ENCODE measurements at regions of chr19 and their contacts with region 1.

Region 1: GRCh38 chr19:1592755-1593500 is at the start of gene MBD3:
- DNase-seq: peak; percentile 94 to 96 (median 94)
- H3K4me3 ChIP-seq: peak within 1 kb of the TSS; percentile 63 to 87 (median 78)
- H3K4me3 Mint-ChIP-seq: peak within 1 kb of the TSS; percentile 90 to 94
- H3K27ac ChIP-seq: peak within 1 kb of the TSS; percentile 86 to 90
- H3K27ac Mint-ChIP-seq: peak within 1 kb of the TSS; percentile 82 to 95 (median 88)
- H3K4me1 ChIP-seq: peaks cover 28 to 36% of the 10 kb centered on the region in 2 donors
- H3K4me1 Mint-ChIP-seq: peaks cover 28% of the 10 kb centered on the region
- H3K27me3 ChIP-seq: no peaks in the 10 kb centered on the region
- H3K27me3 Mint-ChIP-seq: peaks cover 0 to 2% (median 0%) of the 10 kb centered on the region in 3 donors
- CTCF ChIP-seq: no peak
- polyA plus RNA-seq, gene MBD3: 2.6 to 35.3 (median 4.9) TPM

Region 2: DNA sequence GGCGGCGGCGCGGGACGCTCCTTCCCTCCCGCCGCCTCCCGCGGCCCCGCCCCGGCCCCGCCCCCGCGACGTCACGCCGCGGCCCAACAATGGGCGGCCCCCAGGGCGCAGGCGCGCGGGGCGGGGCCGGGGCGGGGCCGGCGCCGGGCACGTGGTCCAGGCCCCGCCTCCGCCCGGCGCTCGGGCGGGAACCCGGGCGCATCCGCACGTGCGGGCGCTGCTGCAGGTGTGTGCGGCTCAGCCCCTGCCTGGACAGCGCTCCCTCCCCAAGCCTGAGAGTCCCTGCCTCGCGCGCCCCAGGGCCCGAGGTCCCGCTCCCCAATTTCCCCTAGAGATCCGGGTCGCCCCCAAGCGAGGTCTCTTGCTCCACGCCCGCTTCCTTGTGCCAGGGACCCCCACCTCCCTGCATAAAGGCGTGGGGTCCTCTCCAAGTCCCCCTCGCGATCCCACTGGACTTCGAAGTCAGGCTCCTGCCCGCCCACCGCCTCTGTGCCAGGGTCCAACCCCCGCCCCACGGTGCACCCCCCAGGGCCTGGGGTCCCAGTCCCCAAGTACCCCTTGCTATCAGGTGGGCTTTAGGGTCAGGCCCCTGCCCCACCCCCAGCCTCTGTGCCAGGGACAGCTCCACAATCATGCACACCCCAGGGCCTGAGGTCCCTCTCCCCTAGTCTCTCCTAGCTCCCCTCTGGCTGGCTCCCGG is 24.5 kb before region 1 on chr19 and contains the start of gene MEX3D:
- intact Hi-C with region 1: no loop called
- DNase-seq: peak; percentile 45 to 79 (median 70)
- H3K4me3 ChIP-seq: peak within 1 kb of the TSS in 2 of 3 experiments; percentile 7 to 70
- H3K4me3 Mint-ChIP-seq: peak within 1 kb of the TSS; percentile 64 to 82
- H3K27ac ChIP-seq: no peak within 1 kb of the TSS
- H3K27ac Mint-ChIP-seq: peak within 1 kb of the TSS in 1 of 7 donors; percentile 71
- H3K4me1 ChIP-seq: peaks cover 7 to 15% of the 10 kb centered on the region in 2 donors
- H3K4me1 Mint-ChIP-seq: peaks cover 3% of the 10 kb centered on the region
- H3K27me3 ChIP-seq: peaks cover 3 to 27% of the 10 kb centered on the region in 2 donors
- H3K27me3 Mint-ChIP-seq: peaks cover 18 to 64% (median 36%) of the 10 kb centered on the region in 3 donors
- CTCF ChIP-seq: no peak
- polyA plus RNA-seq, gene MEX3D: 0.08 to 1.0 (median 0.10) TPM

Region 3: GRCh38 chr19:1605236-1606137 is 12.6 kb after region 1 on chr19 and contains the start of gene UQCR11:
- intact Hi-C with region 1: loop called in 1 of 2 experiments (anchors 1 kb)
- DNase-seq: peak; percentile 90 to 92 (median 92)
- H3K4me3 ChIP-seq: peak within 1 kb of the TSS; percentile 65 to 99 (median 99)
- H3K4me3 Mint-ChIP-seq: peak within 1 kb of the TSS; percentile 96 to 99
- H3K27ac ChIP-seq: peak within 1 kb of the TSS; percentile 90
- H3K27ac Mint-ChIP-seq: peak within 1 kb of the TSS; percentile 99 to 100 (median 100)
- H3K4me1 ChIP-seq: peaks cover 45 to 54% of the 10 kb centered on the region in 2 donors
- H3K4me1 Mint-ChIP-seq: peaks cover 50% of the 10 kb centered on the region
- H3K27me3 ChIP-seq: peaks cover 0 to 6% of the 10 kb centered on the region in 2 donors
- H3K27me3 Mint-ChIP-seq: peaks cover 3 to 15% (median 7%) of the 10 kb centered on the region in 3 donors
- CTCF ChIP-seq: peak; percentile 62
- polyA plus RNA-seq, gene UQCR11: 55.6 to 731 (median 659) TPM

Region 4: GRCh38 chr19:1652471-1653299 is 59.8 kb after region 1 on chr19 and contains the start of gene TCF3:
- intact Hi-C with region 1: loop called in 1 of 2 experiments (anchors 5 kb)
- DNase-seq: peak; percentile 99
- H3K4me3 ChIP-seq: peak within 1 kb of the TSS; percentile 74 to 85 (median 75)
- H3K4me3 Mint-ChIP-seq: peak within 1 kb of the TSS; percentile 83 to 91
- H3K27ac ChIP-seq: peak within 1 kb of the TSS; percentile 90 to 99
- H3K27ac Mint-ChIP-seq: peak within 1 kb of the TSS; percentile 92 to 97 (median 95)
- H3K4me1 ChIP-seq: peaks cover 32 to 42% of the 10 kb centered on the region in 2 donors
- H3K4me1 Mint-ChIP-seq: peaks cover 33% of the 10 kb centered on the region
- H3K27me3 ChIP-seq: peaks cover 0 to 6% of the 10 kb centered on the region in 2 donors
- H3K27me3 Mint-ChIP-seq: peaks cover 5 to 10% (median 9%) of the 10 kb centered on the region in 3 donors
- CTCF ChIP-seq: no peak
- polyA plus RNA-seq, gene TCF3: 2.4 to 36.2 (median 3.3) TPM

Region 5: GRCh38 chr19:1715540-1715939 is 122.6 kb after region 1 on chr19:
- intact Hi-C with region 1: no loop called
- DNase-seq: no peak
- H3K4me3 ChIP-seq: no peak overlapping the region
- H3K4me3 Mint-ChIP-seq: no peak overlapping the region
- H3K27ac ChIP-seq: no peak overlapping the region
- H3K27ac Mint-ChIP-seq: no peak overlapping the region
- H3K4me1 ChIP-seq: no peaks in the 10 kb centered on the region
- H3K4me1 Mint-ChIP-seq: no peaks in the 10 kb centered on the region
- H3K27me3 ChIP-seq: peaks cover 7 to 26% of the 10 kb centered on the region in 2 donors
- H3K27me3 Mint-ChIP-seq: peaks cover 42 to 57% (median 53%) of the 10 kb centered on the region in 3 donors
- CTCF ChIP-seq: no peak

Region 6: DNA sequence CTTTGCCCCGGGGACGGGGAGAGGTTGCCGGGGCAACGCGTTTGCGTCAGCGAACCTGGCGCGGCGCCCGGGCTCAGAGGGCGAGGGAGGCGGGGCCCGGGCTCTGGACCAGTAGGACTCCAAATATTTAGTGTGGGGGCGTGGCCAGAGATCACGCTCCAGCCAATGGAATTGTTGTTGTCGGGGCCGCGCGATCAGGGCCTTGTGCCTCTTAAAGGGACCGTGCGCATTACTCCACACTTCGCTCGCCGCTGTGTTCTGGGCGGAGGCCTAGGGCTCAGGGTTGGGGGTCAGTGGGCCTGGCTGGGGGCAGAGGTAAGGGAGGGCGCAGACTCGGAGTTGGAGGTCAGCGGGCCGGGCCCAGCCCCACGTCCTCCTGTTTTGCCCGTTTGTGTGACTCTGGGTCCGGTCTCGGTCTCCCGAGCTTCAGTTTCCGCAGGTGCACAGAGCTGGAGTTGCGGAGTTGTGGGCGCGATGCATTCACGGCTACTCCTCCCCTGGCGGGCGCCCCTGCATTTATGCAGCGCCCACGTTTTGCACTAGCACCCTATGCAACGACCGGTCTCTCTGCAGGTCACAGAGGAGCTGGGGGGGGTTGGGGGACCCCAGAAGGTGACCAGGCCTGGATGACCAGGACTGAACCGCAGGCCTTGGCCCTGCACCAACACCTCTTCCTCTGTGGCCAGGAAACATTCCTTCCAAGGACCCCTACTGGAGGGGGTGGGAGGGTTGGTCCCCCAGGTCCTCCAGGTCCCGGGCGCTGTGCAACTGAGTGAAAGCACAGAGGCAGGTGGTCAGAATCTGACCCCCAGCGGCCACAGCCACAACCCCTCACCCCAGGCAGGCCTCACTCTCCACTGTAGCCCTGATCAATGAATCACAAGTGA is 468.8 kb after region 1 on chr19:
- intact Hi-C with region 1: no loop called
- DNase-seq: peak; percentile 98 to 99 (median 98)
- H3K4me3 ChIP-seq: peak overlapping the region; percentile 54 to 77 (median 74)
- H3K4me3 Mint-ChIP-seq: peak overlapping the region; percentile 82 to 90
- H3K27ac ChIP-seq: peak overlapping the region; percentile 63 to 92
- H3K27ac Mint-ChIP-seq: peak overlapping the region; percentile 88 to 98 (median 94)
- H3K4me1 ChIP-seq: peaks cover 36 to 40% of the 10 kb centered on the region in 2 donors
- H3K4me1 Mint-ChIP-seq: peaks cover 27% of the 10 kb centered on the region
- H3K27me3 ChIP-seq: no peaks in the 10 kb centered on the region
- H3K27me3 Mint-ChIP-seq: peaks cover 0 to 1% (median 0%) of the 10 kb centered on the region in 3 donors
- CTCF ChIP-seq: no peak

Measured in CD14-positive monocyte (primary cell).